PC-9 (cell line): ENCODE measurements at regions of chr10 and their contacts with region 1.

Region 1: GRCh38 chr10:94344522-94345122 is 18.1 kb downstream of the NOC3L start:
- DNase-seq: no peak
- H3K4me3 ChIP-seq: no peak overlapping the region
- H3K27ac ChIP-seq: no peak overlapping the region
- H3K4me1 ChIP-seq: no peaks in the 10 kb centered on the region
- H3K27me3 ChIP-seq: no peaks in the 10 kb centered on the region
- CTCF ChIP-seq: no peak

Region 2: GRCh38 chr10:94315024-94315451 is 29.6 kb before region 1 on chr10:
- CTCF ChIA-PET with region 1: no interaction called
- POLR2A ChIA-PET with region 1: interaction called, 10 read pairs
- intact Hi-C with region 1: no loop called
- DNase-seq: no peak
- H3K4me3 ChIP-seq: no peak overlapping the region
- H3K27ac ChIP-seq: no peak overlapping the region
- H3K4me1 ChIP-seq: no peaks in the 10 kb centered on the region
- H3K27me3 ChIP-seq: no peaks in the 10 kb centered on the region
- CTCF ChIP-seq: no peak

Region 3: GRCh38 chr10:95363303-95363912 is 1018.8 kb after region 1 on chr10:
- CTCF ChIA-PET with region 1: no interaction called
- POLR2A ChIA-PET with region 1: no interaction called
- intact Hi-C with region 1: no loop called
- DNase-seq: peak; percentile 33 to 43
- H3K4me3 ChIP-seq: no peak overlapping the region
- H3K27ac ChIP-seq: no peak overlapping the region
- H3K4me1 ChIP-seq: no peaks in the 10 kb centered on the region
- H3K27me3 ChIP-seq: no peaks in the 10 kb centered on the region
- CTCF ChIP-seq: peak; percentile 88